ENCODE measurements at regions of chr11 and their contacts with region 1.

Region 1: DNA sequence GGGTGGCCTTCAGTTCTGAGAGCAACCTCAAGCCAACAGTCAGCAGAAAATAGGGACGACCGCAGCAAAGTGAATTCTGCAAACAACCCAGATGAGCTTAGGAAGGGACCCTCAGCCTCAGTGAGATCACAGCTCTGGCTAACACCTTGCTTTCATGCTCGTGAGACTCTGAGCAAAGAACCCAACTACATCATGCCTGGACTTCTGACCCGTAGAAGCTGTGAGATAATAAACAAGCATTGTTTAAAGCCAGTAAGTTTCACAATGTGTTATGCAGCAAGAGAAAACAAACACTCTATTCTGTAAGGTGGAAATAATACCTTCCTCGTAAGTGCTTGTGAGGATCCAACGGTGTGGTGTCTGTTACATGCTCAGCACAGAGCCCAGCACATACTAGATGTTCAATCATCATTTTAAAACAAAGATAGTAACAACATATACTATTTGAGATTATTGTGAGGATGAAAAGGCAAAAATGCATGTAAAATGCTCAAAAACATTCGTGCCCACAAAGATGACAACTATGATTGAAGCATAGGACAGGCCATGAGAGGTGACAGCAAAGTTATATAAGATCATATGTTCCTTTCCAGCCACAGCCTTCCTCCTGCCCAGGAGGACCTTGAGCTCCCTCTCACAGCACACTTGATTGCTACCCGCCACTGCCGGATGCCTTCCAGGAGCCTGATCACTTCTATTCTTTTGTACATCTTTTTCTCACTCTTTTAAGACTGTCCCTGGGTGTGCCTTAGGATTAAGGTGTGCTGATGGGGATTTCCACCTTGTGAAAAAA is 433.3 kb downstream of the BUD13 start:
- DNase-seq: peak; percentile 86
- ATAC-seq: peak; percentile 89
- H3K4me3 ChIP-seq: peak overlapping the region in 2 of 3 experiments; percentile 4 to 26; a peak in 3 of 6 replicates
- H3K27ac ChIP-seq: peak overlapping the region; percentile 67
- H3K4me1 ChIP-seq: peaks cover 53% of the 10 kb centered on the region
- H3K27me3 ChIP-seq: no peaks in the 10 kb centered on the region; a peak in 1 of 5 replicates
- CTCF ChIP-seq: no peak
- EP300 ChIP-seq: peak in 1 of 2 experiments; percentile 87; a peak in 2 of 4 replicates
- POLR2A ChIP-seq: no peak
- RAD21 ChIP-seq: no peak

Region 2: DNA sequence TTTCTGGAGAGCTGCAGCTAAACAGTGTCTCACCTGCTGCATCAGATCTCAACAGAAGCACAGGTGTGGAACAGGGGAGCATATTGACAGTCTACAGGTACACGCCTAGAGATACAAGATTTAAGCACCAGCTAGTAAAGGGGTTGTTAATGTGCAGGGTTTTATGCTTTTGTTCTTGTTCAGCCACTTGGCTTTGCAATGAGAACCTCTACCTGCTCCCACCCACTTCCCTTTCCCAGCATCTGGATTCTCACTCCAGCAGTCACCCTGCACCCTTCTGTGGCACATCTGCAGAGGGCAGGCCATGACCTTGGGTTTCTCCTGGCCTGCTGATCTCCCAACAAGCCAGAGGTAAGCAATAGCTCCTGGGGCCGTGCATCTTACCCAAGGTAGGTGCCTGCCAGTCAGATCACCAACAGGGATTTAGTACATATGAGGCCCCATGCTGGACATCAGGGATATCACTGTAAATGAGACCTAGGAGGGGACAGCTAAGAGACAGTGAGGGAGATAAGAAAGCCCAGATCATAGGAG is 13.3 kb before region 1 on chr11:
- CTCF ChIA-PET with region 1: no interaction called
- POLR2A ChIA-PET with region 1: no interaction called
- in situ Hi-C with region 1: no loop called
- intact Hi-C with region 1: no loop called
- DNase-seq: no peak
- ATAC-seq: no peak
- H3K4me3 ChIP-seq: no peak overlapping the region
- H3K27ac ChIP-seq: no peak overlapping the region
- H3K4me1 ChIP-seq: no peaks in the 10 kb centered on the region
- H3K27me3 ChIP-seq: no peaks in the 10 kb centered on the region
- CTCF ChIP-seq: no peak
- EP300 ChIP-seq: no peak
- POLR2A ChIP-seq: no peak
- RAD21 ChIP-seq: no peak

Region 3: GRCh38 chr11:116379185-116379828 is 39.8 kb after region 1 on chr11:
- CTCF ChIA-PET with region 1: no interaction called
- POLR2A ChIA-PET with region 1: no interaction called
- in situ Hi-C with region 1: no loop called
- intact Hi-C with region 1: loop called (anchors 2 kb)
- DNase-seq: peak; percentile 21
- ATAC-seq: no peak
- H3K4me3 ChIP-seq: no peak overlapping the region
- H3K27ac ChIP-seq: no peak overlapping the region
- H3K4me1 ChIP-seq: peaks cover 32% of the 10 kb centered on the region
- H3K27me3 ChIP-seq: no peaks in the 10 kb centered on the region
- CTCF ChIP-seq: no peak
- EP300 ChIP-seq: no peak
- POLR2A ChIP-seq: no peak
- RAD21 ChIP-seq: no peak